ENCODE measurements at regions of chr1 and their contacts with region 1.

Region 1: DNA sequence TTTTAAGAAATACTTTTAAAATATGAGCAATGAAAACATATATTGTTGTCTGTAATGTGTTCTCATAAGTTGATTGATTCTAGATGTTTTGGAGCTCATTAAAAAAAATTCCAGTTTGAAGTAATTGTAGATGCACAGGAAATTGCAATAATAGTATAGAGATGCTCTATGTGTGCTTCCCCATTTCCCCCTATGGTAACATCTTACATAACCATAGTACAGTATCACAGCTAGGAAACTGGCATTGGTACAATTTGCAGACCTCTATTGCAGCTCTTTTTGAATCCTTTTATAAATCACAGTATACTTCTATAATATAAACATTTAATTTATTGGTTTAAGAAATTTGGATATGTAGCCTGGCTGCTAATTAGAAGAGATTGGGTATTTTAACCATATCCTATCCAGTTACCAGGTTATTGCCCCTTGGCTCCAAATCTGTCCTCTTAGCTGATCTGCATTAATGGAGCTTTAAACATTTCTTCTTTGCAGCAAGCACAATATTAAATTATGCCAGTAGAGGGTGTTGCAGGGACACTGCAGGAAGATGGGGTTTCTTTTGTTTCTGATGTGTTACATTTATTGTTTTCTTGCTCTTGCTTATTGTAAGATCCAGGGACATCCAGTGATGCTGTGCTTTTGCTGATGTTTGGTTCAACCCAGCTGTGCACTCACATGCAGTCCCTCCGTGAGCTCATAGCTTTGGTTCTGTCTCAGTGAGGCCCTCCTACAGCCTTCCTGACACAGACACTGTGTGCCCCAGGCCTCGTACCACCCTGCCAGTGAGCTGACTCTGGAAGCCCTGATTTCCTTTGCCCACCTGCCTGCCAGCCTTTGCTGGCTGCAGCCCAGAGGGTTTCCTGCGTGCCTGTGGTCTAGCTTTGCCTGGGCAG is 103.3 kb downstream of the RABGAP1L start:
- DNase-seq: peak; percentile 65
- ATAC-seq: peak; percentile 83
- H3K4me3 ChIP-seq: no peak overlapping the region
- H3K27ac ChIP-seq: no peak overlapping the region
- H3K4me1 ChIP-seq: no peaks in the 10 kb centered on the region
- H3K27me3 ChIP-seq: no peaks in the 10 kb centered on the region
- CTCF ChIP-seq: peak; percentile 89
- POLR2A ChIP-seq: no peak
- RAD21 ChIP-seq: peak; percentile 89

Region 2: DNA sequence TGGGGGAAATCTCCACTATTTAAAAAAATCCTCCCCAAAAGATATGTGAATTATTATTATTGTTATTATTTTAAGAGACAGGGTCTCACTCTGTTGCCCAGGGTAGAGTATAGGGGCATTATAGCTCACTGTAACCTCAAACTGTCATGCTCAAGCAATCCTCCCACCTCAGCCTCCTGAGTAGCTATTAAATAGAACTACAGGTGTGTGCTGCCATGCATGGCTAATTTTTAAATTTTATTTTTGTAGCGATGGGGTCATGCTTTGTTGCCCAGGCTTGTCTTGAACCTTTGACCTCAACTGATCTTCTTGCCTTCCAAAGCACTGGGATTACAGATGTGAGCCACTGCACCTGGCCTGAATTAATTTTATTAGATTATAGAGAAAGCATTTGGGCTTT is 13.5 kb after region 1 on chr1:
- CTCF ChIA-PET with region 1: interaction called, 14 read pairs
- POLR2A ChIA-PET with region 1: no interaction called
- dilution Hi-C with region 1: no loop called
- in situ Hi-C with region 1: no loop called
- intact Hi-C with region 1: no loop called
- DNase-seq: no peak
- ATAC-seq: no peak
- H3K4me3 ChIP-seq: no peak overlapping the region
- H3K27ac ChIP-seq: no peak overlapping the region
- H3K4me1 ChIP-seq: no peaks in the 10 kb centered on the region
- H3K27me3 ChIP-seq: no peaks in the 10 kb centered on the region
- CTCF ChIP-seq: no peak
- POLR2A ChIP-seq: no peak
- RAD21 ChIP-seq: no peak

Region 3: DNA sequence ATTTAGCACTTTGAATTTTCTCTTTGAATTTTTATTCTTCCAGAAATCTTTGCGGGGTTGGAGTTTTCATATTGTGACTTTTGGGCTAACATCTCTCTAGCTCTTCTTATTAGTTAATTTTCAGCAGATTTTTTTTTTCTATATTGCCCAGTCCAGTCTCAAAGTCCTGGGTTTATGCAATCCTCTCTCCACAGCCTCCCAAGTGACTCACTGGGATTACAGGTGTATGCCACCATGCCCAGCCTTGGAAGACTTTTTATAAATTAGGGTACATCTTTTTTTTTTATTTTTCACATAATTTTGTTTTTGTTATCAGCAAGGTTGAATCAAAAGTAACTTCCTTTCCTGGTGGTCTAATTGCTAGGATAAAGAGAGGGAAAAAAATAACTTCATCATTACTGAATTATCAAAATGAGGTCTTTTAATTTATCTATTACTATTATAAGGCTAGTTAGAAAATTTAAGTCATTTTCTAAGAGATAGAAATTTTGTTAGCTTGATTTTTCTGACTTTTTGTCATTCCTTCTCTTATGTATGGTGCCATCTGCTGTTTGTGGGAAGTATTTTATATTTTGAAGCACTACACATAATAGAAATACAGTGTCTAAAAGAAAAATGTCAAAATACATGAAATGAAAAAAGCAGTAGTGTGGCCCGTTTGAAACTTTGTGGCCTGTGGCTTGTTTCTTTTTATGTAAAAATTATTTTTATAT is 463.7 kb after region 1 on chr1:
- CTCF ChIA-PET with region 1: interaction called, 44 read pairs
- POLR2A ChIA-PET with region 1: interaction called, 4 read pairs
- dilution Hi-C with region 1: loop called (anchors 25 kb)
- in situ Hi-C with region 1: loop called (anchors 5 kb)
- intact Hi-C with region 1: loop called (anchors 1 kb)
- DNase-seq: peak; percentile 55
- ATAC-seq: no peak
- H3K4me3 ChIP-seq: no peak overlapping the region
- H3K27ac ChIP-seq: no peak overlapping the region
- H3K4me1 ChIP-seq: no peaks in the 10 kb centered on the region
- H3K27me3 ChIP-seq: no peaks in the 10 kb centered on the region
- CTCF ChIP-seq: peak; percentile 64
- POLR2A ChIP-seq: no peak
- RAD21 ChIP-seq: peak; percentile 58

Region 4: GRCh38 chr1:174743654-174744561 is 481.3 kb after region 1 on chr1:
- CTCF ChIA-PET with region 1: interaction called, 22 read pairs
- POLR2A ChIA-PET with region 1: no interaction called
- dilution Hi-C with region 1: no loop called
- in situ Hi-C with region 1: no loop called
- intact Hi-C with region 1: loop called (anchors 1 kb)
- DNase-seq: peak; percentile 63
- ATAC-seq: peak; percentile 51
- H3K4me3 ChIP-seq: no peak overlapping the region
- H3K27ac ChIP-seq: no peak overlapping the region
- H3K4me1 ChIP-seq: no peaks in the 10 kb centered on the region
- H3K27me3 ChIP-seq: no peaks in the 10 kb centered on the region
- CTCF ChIP-seq: peak; percentile 81
- POLR2A ChIP-seq: no peak
- RAD21 ChIP-seq: peak; percentile 72

Region 5: GRCh38 chr1:174999216-174999925 is 736.8 kb after region 1 on chr1:
- CTCF ChIA-PET with region 1: no interaction called
- POLR2A ChIA-PET with region 1: no interaction called
- dilution Hi-C with region 1: no loop called
- in situ Hi-C with region 1: loop called (anchors 25 kb)
- intact Hi-C with region 1: no loop called
- DNase-seq: peak; percentile 99
- ATAC-seq: peak; percentile 87
- H3K4me3 ChIP-seq: peak overlapping the region; percentile 96
- H3K27ac ChIP-seq: peak overlapping the region; percentile 91
- H3K4me1 ChIP-seq: peaks cover 2% of the 10 kb centered on the region; the same call in 1 of the 2 replicates
- H3K27me3 ChIP-seq: no peaks in the 10 kb centered on the region
- CTCF ChIP-seq: no peak
- POLR2A ChIP-seq: peak; percentile 97
- RAD21 ChIP-seq: no peak